Activated T-helper 2 cell treated with anti-CD3 and anti-CD28 coated beads, Interferon-gamma antibody, Interleukin-2, Interleukin-4, amounts not matched to agents 10 μg/mL and 5 μg/mL and 100 μg/mL, durations not matched to agents 14 hours and 24 hours and 36 hours (primary cell): ENCODE measurements at regions of chr6 and their contacts with region 1.

Region 1: GRCh38 chr6:42038811-42039408 is 11.4 kb upstream of the TAF8 start:
- DNase-seq: no peak
- H3K4me3 Mint-ChIP-seq: peak overlapping the region; percentile 64
- H3K27ac Mint-ChIP-seq: peak overlapping the region; percentile 93
- H3K4me1 Mint-ChIP-seq: peaks cover 59% of the 10 kb centered on the region
- H3K27me3 Mint-ChIP-seq: no peaks in the 10 kb centered on the region

Region 2: DNA sequence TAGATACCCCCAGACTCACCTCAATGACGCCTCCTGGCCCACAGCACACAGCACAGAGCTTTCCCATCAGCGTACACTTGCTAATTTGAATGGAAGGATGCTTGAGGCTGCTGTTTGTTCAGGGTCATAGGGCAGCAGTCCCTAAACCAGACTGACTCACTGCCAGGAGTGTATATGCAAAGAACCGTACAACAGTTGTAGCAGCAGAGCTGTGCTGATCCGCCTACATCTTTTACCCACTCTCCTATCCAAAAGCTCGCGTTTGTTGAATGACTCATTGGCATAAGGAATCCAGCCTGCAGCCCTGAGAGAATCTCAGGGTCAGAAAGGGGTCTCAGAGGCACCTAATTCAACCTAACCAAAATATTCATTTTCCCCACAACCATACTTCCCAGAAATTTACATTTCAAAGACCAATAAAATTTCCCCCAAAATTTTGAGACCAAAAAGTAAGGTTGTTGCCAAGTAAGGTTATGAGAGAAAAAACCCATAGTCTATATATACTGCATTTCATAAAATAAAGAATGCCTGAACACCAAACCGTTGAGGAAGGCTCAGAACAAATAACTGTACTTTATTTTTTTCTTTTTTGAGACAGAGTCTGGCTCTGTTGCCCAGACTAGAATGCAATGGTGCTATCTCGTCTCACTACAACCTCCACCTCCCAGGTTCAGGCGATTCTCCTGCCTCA is 62.0 kb before region 1 on chr6:
- intact Hi-C with region 1: loop called (anchors 2 kb)
- DNase-seq: no peak
- H3K4me3 Mint-ChIP-seq: no peak overlapping the region
- H3K27ac Mint-ChIP-seq: peak overlapping the region; percentile 79
- H3K4me1 Mint-ChIP-seq: peaks cover 33% of the 10 kb centered on the region
- H3K27me3 Mint-ChIP-seq: no peaks in the 10 kb centered on the region

Region 3: DNA sequence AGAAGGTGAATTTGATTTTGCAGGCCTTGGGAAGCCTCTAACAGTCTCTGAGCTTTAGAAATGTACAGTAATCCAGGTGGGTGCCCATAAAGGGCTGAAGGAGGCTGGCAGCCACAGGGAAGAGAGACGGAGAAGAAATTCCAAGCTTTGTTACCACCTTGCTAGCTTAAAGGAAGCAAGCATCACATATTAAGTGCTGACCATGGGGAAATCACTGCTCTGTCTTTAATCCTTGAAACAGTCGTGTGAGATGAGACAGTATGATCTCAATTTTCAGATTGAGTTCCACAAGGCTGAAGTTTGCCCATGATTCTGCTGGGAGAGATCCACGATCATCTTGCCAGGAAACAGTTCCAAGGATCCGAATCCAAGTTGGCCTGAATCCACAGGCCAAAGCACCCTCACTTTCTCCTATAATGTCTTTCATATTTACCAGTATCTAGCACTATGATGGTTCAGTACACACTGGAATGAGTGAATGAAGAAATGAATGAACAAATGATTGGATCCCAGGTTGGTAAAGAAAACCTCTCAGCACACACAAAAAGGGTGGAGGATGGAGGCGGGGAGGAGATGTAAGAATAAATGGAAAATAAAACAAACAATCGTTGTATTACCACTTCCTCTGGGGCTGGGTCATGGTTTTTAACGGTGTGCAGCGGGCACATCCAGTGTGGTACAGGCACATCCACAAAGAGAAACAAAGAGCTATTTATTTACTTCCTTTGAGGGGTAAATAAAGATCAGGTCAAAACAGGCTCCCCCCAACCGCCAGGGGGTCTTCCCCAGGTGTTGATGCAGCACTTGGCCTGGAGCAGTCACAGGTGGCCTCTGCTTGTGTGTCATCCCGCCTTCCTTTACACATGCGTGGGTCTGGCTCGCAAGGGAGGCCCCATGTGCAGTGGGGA is 16.8 kb before region 1 on chr6:
- intact Hi-C with region 1: loop called (anchors 1 kb)
- DNase-seq: peak; percentile 68
- H3K4me3 Mint-ChIP-seq: peak overlapping the region; percentile 64
- H3K27ac Mint-ChIP-seq: peak overlapping the region; percentile 96
- H3K4me1 Mint-ChIP-seq: peaks cover 58% of the 10 kb centered on the region
- H3K27me3 Mint-ChIP-seq: no peaks in the 10 kb centered on the region